ENCODE measurements at regions of chr7 and their contacts with region 1.

Region 1: GRCh38 chr7:140924019-140924820 is 509 bp downstream of the BRAF start:
- DNase-seq: peak; percentile 78 to 92 (median 90)
- ATAC-seq: peak; percentile 86 to 89
- H3K4me3 ChIP-seq: peak overlapping the region; percentile 89
- H3K27ac ChIP-seq: peak overlapping the region; percentile 82
- H3K4me1 ChIP-seq: no peaks in the 10 kb centered on the region
- H3K27me3 ChIP-seq: no peaks in the 10 kb centered on the region

Region 2: GRCh38 chr7:141001122-141001521 is 76.9 kb after region 1 on chr7:
- intact Hi-C with region 1: loop called in 1 of 4 experiments (anchors 10 kb)
- DNase-seq: no peak
- ATAC-seq: no peak
- H3K4me3 ChIP-seq: no peak overlapping the region
- H3K27ac ChIP-seq: no peak overlapping the region
- H3K4me1 ChIP-seq: no peaks in the 10 kb centered on the region
- H3K27me3 ChIP-seq: no peaks in the 10 kb centered on the region